Activated B cell treated with CpG ODN at 0.5 μM for 24 hours (primary cell): ENCODE measurements at regions of chr5 and their contacts with region 1.

Region 1: DNA sequence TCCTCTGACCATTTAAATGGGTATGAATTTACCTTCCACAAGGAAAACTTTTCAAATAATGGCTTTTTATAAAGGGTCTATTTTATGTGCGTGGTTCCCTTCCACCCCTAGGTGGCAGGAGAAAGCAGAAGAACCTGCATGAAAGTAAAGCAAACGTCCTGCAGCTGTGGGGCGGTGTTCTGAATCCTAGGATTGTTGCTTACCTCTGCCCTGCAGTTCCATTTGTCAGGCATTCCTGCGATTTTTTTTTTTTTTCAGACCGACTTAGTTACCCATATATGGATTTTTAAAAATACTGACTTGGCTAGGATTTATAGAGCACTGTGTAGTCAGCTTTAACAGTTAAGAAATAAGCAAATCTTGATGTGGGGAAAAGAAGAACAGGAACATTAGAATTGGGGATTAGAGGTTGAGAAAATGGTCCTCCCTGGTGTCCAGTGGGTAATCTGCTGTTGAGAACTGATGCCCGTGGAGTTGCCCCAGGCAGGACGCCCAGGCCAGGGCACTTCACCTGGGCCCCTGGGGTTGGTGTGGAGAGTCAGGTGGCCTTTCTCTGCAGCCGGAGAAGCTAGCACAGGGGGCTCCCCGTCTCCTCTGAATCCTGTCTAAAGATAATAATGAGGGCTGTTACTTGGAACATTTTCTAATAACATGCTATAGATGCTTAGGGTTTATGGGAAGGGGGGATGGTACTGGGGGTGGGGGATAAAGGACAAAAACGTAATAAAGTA is 30.4 kb upstream of the LTC4S start:
- DNase-seq: no peak
- ATAC-seq: peak; percentile 71
- H3K4me3 Mint-ChIP-seq: no peak overlapping the region
- H3K27ac Mint-ChIP-seq: no peak overlapping the region
- H3K4me1 Mint-ChIP-seq: peaks cover 51% of the 10 kb centered on the region
- H3K27me3 Mint-ChIP-seq: no peaks in the 10 kb centered on the region
- CTCF ChIP-seq: peak; percentile 74

Region 2: GRCh38 chr5:179780362-179780761 is 17.0 kb after region 1 on chr5:
- CTCF ChIA-PET with region 1: no interaction called
- POLR2A ChIA-PET with region 1: no interaction called
- intact Hi-C with region 1: no loop called
- DNase-seq: no peak
- ATAC-seq: no peak
- H3K4me3 Mint-ChIP-seq: no peak overlapping the region
- H3K27ac Mint-ChIP-seq: no peak overlapping the region
- H3K4me1 Mint-ChIP-seq: no peaks in the 10 kb centered on the region
- H3K27me3 Mint-ChIP-seq: no peaks in the 10 kb centered on the region
- CTCF ChIP-seq: no peak

Region 3: GRCh38 chr5:179795863-179796833 is 32.8 kb after region 1 on chr5:
- CTCF ChIA-PET with region 1: interaction called, 11 read pairs
- POLR2A ChIA-PET with region 1: no interaction called
- intact Hi-C with region 1: loop called (anchors 1 kb)
- DNase-seq: peak; percentile 78
- ATAC-seq: peak; percentile 78
- H3K4me3 Mint-ChIP-seq: peak overlapping the region; percentile 64
- H3K27ac Mint-ChIP-seq: peak overlapping the region; percentile 7
- H3K4me1 Mint-ChIP-seq: peaks cover 29% of the 10 kb centered on the region
- H3K27me3 Mint-ChIP-seq: no peaks in the 10 kb centered on the region
- CTCF ChIP-seq: peak; percentile 32

Region 4: DNA sequence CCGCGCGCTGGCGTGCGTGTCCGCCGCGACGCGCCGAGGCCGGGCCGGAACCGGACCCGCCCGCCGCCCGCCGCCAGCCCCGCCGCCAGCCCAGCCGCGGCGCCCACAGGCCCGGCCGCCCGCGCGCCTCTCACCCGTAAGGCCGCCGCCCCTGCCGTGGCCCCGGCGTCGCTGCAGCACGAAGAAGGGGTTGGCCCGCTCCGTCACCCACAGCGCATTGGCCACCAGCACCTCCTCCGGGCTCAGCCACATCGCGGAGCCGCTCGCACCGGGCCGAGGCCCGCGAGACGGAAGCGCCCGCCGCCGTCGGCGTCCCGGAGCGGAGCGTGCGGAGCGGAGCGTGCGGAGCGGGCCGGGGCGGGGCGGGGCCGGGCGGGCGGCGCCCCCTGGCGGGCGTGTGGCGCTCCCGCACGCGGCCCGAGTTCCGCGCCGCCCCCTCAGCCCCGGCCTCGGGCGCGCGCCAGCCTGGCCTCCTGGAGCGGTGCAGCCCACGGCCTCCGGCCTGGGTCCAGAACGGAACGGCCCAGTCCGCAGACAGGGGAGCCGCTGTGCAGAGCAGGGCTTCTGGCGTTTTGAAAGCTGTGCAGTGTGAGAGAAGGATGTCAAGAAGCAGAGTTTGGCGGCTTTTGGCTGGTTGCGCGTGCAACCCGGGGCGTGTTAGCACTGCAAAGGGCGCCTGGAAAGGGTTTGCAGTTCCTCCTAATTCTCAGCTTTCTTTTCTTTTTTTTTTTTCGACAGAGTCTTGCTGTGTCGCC is 144.4 kb after region 1 on chr5 and contains the start of gene TBC1D9B:
- CTCF ChIA-PET with region 1: interaction called, 5 read pairs
- POLR2A ChIA-PET with region 1: no interaction called
- intact Hi-C with region 1: loop called (anchors 1 kb)
- DNase-seq: peak; percentile 74
- ATAC-seq: peak; percentile 90
- H3K4me3 Mint-ChIP-seq: peak within 1 kb of the TSS; percentile 87
- H3K27ac Mint-ChIP-seq: peak within 1 kb of the TSS; percentile 83
- H3K4me1 Mint-ChIP-seq: peaks cover 29% of the 10 kb centered on the region
- H3K27me3 Mint-ChIP-seq: no peaks in the 10 kb centered on the region
- CTCF ChIP-seq: no peak
- total RNA-seq, gene TBC1D9B: 111 and 117 TPM in 2 replicates

Region 5: DNA sequence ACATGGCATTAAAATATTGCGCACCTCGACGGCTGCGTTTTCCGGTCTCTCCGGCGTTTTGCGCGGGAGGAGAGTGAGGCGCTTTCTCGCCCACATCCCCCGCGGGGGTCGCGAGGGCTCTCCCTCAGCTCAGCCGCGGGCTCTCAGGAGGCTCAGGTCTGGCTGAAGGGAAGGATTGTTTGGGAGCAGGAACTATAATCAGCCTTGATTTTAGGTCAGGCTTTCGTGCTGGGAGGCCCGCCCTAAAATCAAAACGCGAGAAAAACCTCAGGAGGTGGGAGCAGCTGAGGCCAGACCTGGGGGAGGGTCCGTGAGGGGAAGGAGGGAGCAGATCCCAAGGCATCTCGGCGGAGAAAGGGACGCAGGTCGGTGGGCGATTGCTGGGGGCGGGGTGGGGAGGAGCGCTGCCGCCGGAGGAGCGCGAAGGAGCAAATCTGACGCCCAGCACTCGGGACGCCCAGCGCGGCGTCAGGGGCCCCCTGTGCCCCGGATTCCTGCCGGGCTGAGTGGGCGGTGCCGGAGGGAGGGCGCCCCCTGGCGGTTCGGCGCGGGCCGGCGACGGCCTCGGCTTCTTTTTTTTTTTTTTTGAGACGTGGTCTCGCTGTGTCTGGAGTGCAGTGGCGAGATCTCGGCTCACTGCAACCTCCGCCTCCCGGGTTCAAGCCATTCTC is 326.9 kb after region 1 on chr5:
- CTCF ChIA-PET with region 1: interaction called, 8 read pairs
- POLR2A ChIA-PET with region 1: no interaction called
- intact Hi-C with region 1: loop called (anchors 1 kb)
- DNase-seq: peak; percentile 85
- ATAC-seq: peak; percentile 91
- H3K4me3 Mint-ChIP-seq: peak overlapping the region; percentile 86
- H3K27ac Mint-ChIP-seq: peak overlapping the region; percentile 56
- H3K4me1 Mint-ChIP-seq: peaks cover 15% of the 10 kb centered on the region
- H3K27me3 Mint-ChIP-seq: peaks cover 8% of the 10 kb centered on the region
- CTCF ChIP-seq: no peak

Region 6: DNA sequence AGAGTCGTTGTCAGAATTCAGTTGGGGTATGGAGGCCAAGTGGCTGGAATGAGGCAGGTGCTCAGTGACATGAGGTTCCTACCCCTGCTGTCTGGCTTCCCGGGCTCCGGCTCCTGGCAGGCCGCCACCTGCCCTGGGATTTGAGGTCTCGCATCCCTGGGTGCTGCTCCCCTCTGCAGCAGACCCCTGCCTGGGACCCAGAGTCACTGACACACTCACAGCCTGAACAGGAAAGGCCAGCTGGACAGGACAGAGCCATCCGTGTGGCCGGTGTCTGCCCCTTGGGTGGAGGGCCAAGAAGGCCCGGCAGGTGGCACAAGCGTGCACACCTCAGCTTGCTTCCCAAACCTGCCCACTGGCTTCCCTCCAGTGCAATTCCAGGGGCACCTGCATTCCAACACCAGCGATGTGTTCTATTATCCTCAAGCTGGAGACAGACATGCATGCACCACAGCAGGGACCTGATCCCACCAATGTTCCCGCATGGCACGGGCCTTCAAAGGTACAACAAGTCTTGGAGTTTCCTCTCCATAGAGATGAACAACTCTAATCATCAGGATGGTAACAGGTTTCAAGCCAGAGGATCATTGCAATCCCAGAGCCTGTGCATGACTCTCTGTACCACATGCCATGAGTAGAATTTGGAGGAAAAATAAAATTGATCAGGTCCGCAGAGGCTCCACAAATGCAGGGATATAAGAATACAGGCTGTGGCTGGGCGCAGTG is 353.8 kb after region 1 on chr5:
- CTCF ChIA-PET with region 1: no interaction called
- POLR2A ChIA-PET with region 1: no interaction called
- intact Hi-C with region 1: no loop called
- DNase-seq: no peak
- ATAC-seq: no peak
- H3K4me3 Mint-ChIP-seq: no peak overlapping the region
- H3K27ac Mint-ChIP-seq: no peak overlapping the region
- H3K4me1 Mint-ChIP-seq: no peaks in the 10 kb centered on the region
- H3K27me3 Mint-ChIP-seq: no peaks in the 10 kb centered on the region
- CTCF ChIP-seq: no peak